HepG2 (cell line): ENCODE measurements at regions of chr4 and their contacts with region 1.

Region 1: DNA sequence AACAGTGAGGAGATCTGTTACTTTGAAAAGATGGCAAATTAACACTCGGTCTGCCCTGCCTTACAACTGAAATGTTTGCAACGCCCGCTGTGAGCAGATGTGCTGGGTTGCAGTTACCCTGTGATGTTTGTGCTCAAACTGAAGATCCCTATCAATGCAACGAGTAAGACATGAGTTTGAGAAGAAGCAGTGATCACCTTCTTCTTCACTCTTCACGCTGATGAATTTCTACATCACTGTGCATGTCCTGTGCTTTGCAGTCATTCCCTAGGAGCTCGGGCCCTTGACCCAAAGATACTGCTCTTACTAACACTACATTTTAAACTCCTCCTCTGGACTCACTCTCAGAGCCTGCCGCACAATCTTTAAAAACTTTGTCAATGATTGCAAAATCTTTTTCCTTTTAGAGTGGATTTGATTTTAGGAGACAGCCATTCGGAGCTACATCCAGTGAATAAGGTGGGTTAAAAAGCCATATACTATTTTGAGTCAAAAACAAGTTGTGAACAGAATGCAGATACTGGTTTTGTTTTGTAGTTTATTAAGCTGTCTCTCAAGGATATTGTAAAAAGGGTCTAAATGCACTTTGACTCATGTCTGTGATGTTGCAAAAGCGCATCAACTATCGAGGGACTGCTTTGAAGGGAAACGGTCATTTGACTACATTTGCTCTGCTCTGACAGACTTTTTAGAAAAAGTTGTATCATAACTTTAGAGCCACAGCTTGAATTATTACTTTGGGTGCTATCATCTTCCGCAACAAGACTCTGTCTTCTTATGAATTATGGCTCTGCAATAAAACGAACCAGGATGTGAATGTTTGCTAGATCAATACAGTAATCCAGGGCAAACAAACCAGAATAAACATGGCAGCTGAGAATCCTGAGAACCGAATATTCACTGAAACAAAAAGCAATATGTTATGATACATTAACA is 5.7 kb upstream of the RHOH start:
- DNase-seq: peak; percentile 75
- ATAC-seq: peak; percentile 66
- H3K4me3 ChIP-seq: peak overlapping the region; percentile 26 to 54 (median 47)
- H3K27ac ChIP-seq: peak overlapping the region; percentile 76
- H3K4me1 ChIP-seq: peaks cover 70% of the 10 kb centered on the region
- H3K27me3 ChIP-seq: no peaks in the 10 kb centered on the region
- CTCF ChIP-seq: no peak
- EP300 ChIP-seq: peak; percentile 47 to 85; a peak in 2 of 4 replicates
- POLR2A ChIP-seq: no peak
- RAD21 ChIP-seq: no peak

Region 2: GRCh38 chr4:40157436-40157835 is 33.7 kb before region 1 on chr4:
- CTCF ChIA-PET with region 1: no interaction called
- POLR2A ChIA-PET with region 1: interaction called, 3 read pairs
- in situ Hi-C with region 1: no loop called
- intact Hi-C with region 1: loop called (anchors 2 kb)
- DNase-seq: no peak
- ATAC-seq: no peak
- H3K4me3 ChIP-seq: no peak overlapping the region
- H3K27ac ChIP-seq: no peak overlapping the region
- H3K4me1 ChIP-seq: no peaks in the 10 kb centered on the region
- H3K27me3 ChIP-seq: no peaks in the 10 kb centered on the region
- CTCF ChIP-seq: no peak
- EP300 ChIP-seq: no peak
- POLR2A ChIP-seq: no peak
- RAD21 ChIP-seq: no peak